Activated CD4-positive, alpha-beta T cell treated with anti-CD3 and anti-CD28 coated beads for 36 hours (primary cell): ENCODE measurements at regions of chr6 and their contacts with region 1.

Region 1: GRCh38 chr6:136792410-136793262 is at the start of gene MAP3K5:
- DNase-seq: peak; percentile 97
- ATAC-seq: peak; percentile 79
- H3K4me3 Mint-ChIP-seq: peak within 1 kb of the TSS; percentile 90
- H3K27ac Mint-ChIP-seq: peak within 1 kb of the TSS; percentile 93
- H3K4me1 Mint-ChIP-seq: peaks cover 35% of the 10 kb centered on the region
- H3K27me3 Mint-ChIP-seq: no peaks in the 10 kb centered on the region
- total RNA-seq, gene MAP3K5: 6.7 to 7.3 TPM

Region 2: GRCh38 chr6:136582711-136583471 is 209.7 kb before region 1 on chr6:
- CTCF ChIA-PET with region 1: interaction called, 8 read pairs
- POLR2A ChIA-PET with region 1: no interaction called
- intact Hi-C with region 1: loop called (anchors 1 to 2 kb)
- DNase-seq: no peak
- ATAC-seq: no peak
- H3K4me3 Mint-ChIP-seq: no peak overlapping the region
- H3K27ac Mint-ChIP-seq: no peak overlapping the region
- H3K4me1 Mint-ChIP-seq: no peaks in the 10 kb centered on the region
- H3K27me3 Mint-ChIP-seq: no peaks in the 10 kb centered on the region

Region 3: GRCh38 chr6:136633355-136633754 is 159.3 kb before region 1 on chr6:
- CTCF ChIA-PET with region 1: interaction called, 13 read pairs
- POLR2A ChIA-PET with region 1: no interaction called
- intact Hi-C with region 1: no loop called
- DNase-seq: no peak
- ATAC-seq: no peak
- H3K4me3 Mint-ChIP-seq: no peak overlapping the region
- H3K27ac Mint-ChIP-seq: no peak overlapping the region
- H3K4me1 Mint-ChIP-seq: peaks cover 2% of the 10 kb centered on the region
- H3K27me3 Mint-ChIP-seq: no peaks in the 10 kb centered on the region

Region 4: DNA sequence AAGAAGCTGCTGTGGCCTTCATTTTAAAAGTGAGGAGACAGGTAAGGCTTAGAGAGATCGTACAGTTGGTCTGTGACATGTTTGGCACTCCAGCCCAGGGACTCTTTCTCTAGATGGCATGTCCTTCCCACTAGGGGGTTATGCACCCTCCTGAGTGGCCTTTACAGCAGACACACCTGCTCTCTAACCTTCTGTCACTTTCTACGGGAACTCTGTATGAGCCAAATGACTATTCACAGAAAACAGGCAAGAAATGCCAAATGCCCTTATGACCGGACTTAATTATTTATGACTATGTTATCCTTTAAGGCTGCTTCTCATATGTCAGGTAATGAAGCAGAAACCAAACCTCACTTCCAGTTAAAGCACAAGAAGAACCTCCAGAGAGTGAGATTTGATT is 91.6 kb before region 1 on chr6:
- CTCF ChIA-PET with region 1: interaction called, 9 read pairs
- POLR2A ChIA-PET with region 1: no interaction called
- intact Hi-C with region 1: loop called in 1 of 2 experiments (anchors 2 kb)
- DNase-seq: no peak
- ATAC-seq: no peak
- H3K4me3 Mint-ChIP-seq: no peak overlapping the region
- H3K27ac Mint-ChIP-seq: no peak overlapping the region
- H3K4me1 Mint-ChIP-seq: peaks cover 22% of the 10 kb centered on the region
- H3K27me3 Mint-ChIP-seq: no peaks in the 10 kb centered on the region

Region 5: DNA sequence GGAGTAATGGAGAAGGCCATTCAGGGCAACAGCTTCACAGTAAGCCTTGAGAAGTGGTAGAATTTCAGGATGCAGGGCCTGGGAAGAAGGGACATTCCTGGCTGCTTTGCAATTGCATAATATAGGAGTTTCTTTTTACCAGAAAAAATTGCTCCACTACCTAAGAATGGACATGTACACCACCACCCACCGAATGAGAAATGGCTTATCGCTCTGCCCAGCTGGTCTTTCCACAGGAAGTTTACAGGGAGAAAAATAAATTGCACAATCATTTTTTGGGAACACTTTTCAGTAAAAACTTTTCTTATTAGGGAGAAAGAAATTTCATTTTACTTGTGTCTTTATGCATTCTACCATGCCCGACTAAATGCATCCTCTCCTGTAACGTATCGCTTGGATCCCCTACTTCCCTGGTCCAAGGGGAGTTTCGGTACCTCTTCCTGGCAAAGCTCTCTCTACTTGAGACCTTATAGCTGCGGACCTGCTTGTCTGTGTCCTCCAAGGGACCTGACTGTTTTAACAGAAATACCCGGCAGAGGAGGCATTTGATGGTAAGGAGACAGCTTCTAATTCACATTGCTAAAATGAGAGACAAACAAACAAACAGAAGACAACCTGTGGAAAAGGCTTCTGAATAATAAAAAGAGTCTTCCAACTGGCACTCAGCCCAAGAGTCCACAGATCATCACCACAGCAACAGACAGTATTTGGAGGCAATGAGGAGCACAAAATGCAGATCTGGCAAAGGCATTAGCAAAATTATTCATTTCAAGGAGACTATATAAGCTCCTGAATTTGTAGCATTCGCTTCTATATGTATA is 54.6 kb before region 1 on chr6:
- CTCF ChIA-PET with region 1: interaction called, 16 read pairs
- POLR2A ChIA-PET with region 1: no interaction called
- intact Hi-C with region 1: no loop called
- DNase-seq: no peak
- ATAC-seq: no peak
- H3K4me3 Mint-ChIP-seq: no peak overlapping the region
- H3K27ac Mint-ChIP-seq: no peak overlapping the region
- H3K4me1 Mint-ChIP-seq: peaks cover 6% of the 10 kb centered on the region
- H3K27me3 Mint-ChIP-seq: no peaks in the 10 kb centered on the region

Region 6: GRCh38 chr6:136822376-136823127 is 29.9 kb after region 1 on chr6 and contains the start of gene PEX7:
- CTCF ChIA-PET with region 1: interaction called, 22 read pairs
- POLR2A ChIA-PET with region 1: interaction called, 4 read pairs
- intact Hi-C with region 1: loop called (anchors 1 kb)
- DNase-seq: peak; percentile 94
- ATAC-seq: peak; percentile 95
- H3K4me3 Mint-ChIP-seq: peak within 1 kb of the TSS; percentile 82
- H3K27ac Mint-ChIP-seq: peak within 1 kb of the TSS; percentile 94
- H3K4me1 Mint-ChIP-seq: peaks cover 24% of the 10 kb centered on the region
- H3K27me3 Mint-ChIP-seq: no peaks in the 10 kb centered on the region
- total RNA-seq, gene PEX7: 3.6 to 4.9 TPM

Region 7: DNA sequence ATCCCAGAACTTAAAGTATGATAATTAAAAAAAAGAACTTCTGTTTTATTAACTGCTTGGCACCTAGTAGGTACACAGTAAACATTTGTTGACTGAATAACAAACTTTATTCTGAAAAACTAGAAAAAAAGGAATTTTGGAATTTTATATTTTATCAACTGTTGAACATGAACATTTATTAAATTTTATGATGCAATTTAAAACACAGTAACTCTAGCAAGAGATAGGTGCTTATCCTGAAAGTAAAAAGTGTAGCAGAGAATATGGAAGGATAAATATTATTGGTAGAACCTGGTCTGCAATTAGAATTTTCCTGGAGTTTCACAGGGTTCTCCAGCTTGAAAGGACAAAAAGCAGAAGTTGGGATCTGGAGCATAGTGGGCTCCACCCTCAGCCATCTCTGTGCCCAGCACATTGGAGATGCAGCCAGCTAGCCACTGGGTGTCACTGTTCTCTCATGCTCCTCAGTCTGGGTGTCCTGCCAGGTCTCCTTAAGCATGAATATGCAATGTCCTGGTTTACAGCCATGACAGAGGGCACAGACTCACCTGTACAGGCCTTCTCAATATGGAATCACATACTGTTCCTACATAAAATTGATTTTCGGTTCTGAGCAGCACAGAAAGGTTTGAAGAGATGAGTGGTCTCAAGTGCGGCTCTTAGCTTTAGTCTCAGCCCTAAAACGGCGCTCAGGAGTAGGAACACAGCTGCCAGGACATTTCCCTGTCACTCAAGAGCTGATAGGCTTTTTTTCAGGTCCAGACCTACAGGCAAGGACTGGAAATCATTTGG is 283.8 kb after region 1 on chr6:
- CTCF ChIA-PET with region 1: no interaction called
- POLR2A ChIA-PET with region 1: no interaction called
- intact Hi-C with region 1: no loop called
- DNase-seq: peak; percentile 78
- ATAC-seq: peak; percentile 92
- H3K4me3 Mint-ChIP-seq: no peak overlapping the region
- H3K27ac Mint-ChIP-seq: no peak overlapping the region
- H3K4me1 Mint-ChIP-seq: no peaks in the 10 kb centered on the region
- H3K27me3 Mint-ChIP-seq: peaks cover 27% of the 10 kb centered on the region